ENCODE measurements at regions of chr1 and their contacts with region 1.

Region 1: GRCh38 chr1:230243583-230244353 is 176.7 kb downstream of the GALNT2 start:
- DNase-seq: no peak
- H3K4me3 Mint-ChIP-seq: no peak overlapping the region
- H3K27ac Mint-ChIP-seq: peak overlapping the region; percentile 68
- H3K4me1 Mint-ChIP-seq: peaks cover 40% of the 10 kb centered on the region
- H3K27me3 Mint-ChIP-seq: no peaks in the 10 kb centered on the region

Region 2: GRCh38 chr1:230127105-230128054 is 116.4 kb before region 1 on chr1:
- intact Hi-C with region 1: loop called (anchors 5 kb)
- DNase-seq: peak; percentile 88
- H3K4me3 Mint-ChIP-seq: peak overlapping the region; percentile 76
- H3K27ac Mint-ChIP-seq: peak overlapping the region; percentile 81
- H3K4me1 Mint-ChIP-seq: peaks cover 70% of the 10 kb centered on the region
- H3K27me3 Mint-ChIP-seq: no peaks in the 10 kb centered on the region

Region 3: GRCh38 chr1:230303822-230304221 is 60.1 kb after region 1 on chr1:
- intact Hi-C with region 1: loop called (anchors 2 kb)
- DNase-seq: no peak
- H3K4me3 Mint-ChIP-seq: no peak overlapping the region
- H3K27ac Mint-ChIP-seq: peak overlapping the region; percentile 2
- H3K4me1 Mint-ChIP-seq: peaks cover 19% of the 10 kb centered on the region
- H3K27me3 Mint-ChIP-seq: no peaks in the 10 kb centered on the region

Region 4: GRCh38 chr1:230335861-230336522 is 92.2 kb after region 1 on chr1:
- intact Hi-C with region 1: no loop called
- DNase-seq: no peak
- H3K4me3 Mint-ChIP-seq: no peak overlapping the region
- H3K27ac Mint-ChIP-seq: no peak overlapping the region
- H3K4me1 Mint-ChIP-seq: no peaks in the 10 kb centered on the region
- H3K27me3 Mint-ChIP-seq: peaks cover 2% of the 10 kb centered on the region

Measured in activated CD4-positive, alpha-beta T cell treated with anti-CD3 and anti-CD28 coated beads, Interleukin-2, amount 10 ng/mL, durations not matched to agents 24 days and 14 days (primary cell).